GM12878 (cell line): ENCODE measurements at regions of chr9 and their contacts with region 1.

Region 1: DNA sequence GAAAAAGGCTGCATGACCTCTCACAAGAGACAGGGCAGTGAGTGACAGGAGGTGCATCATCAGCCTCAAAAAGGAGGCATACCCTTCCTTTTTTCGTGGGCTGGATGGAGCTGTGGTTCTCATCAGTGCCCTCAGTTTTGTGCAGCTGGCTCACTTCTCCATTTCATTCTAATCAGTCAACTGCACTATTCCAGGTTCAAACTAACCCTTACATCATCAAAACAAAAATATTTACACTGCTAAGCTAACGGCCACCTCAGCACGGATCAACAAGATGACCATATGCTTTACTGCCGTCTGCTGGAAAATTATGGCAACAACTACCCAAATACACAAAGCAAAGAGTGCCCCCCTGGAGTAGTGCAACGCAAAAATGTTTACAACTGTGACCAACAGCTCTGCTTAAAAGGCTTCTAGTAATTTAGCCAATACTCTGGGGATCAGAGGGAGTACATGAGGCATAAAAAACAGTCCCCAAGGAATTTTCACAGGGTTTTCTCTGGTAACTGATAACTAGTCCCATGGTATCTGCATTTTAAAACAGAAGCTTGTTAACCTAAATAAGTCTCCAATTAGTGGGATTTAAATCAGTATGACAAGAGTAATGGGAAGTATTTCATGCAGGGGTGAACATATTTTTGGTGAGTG is 10.8 kb downstream of the KCNV2 start:
- DNase-seq: peak; percentile 61
- ATAC-seq: peak; percentile 93
- H3K4me3 ChIP-seq: no peak overlapping the region
- H3K27ac ChIP-seq: no peak overlapping the region
- H3K4me1 ChIP-seq: no peaks in the 10 kb centered on the region; the same call in 1 of the 2 replicates
- H3K27me3 ChIP-seq: no peaks in the 10 kb centered on the region
- CTCF ChIP-seq: peak; percentile 81 to 90 (median 87)
- EP300 ChIP-seq: peak; percentile 11 to 18; a peak in 2 of 4 replicates
- POLR2A ChIP-seq: no peak
- RAD21 ChIP-seq: peak; percentile 88

Region 2: GRCh38 chr9:2158111-2158610 is 569.9 kb before region 1 on chr9:
- CTCF ChIA-PET with region 1: interaction called, 5 read pairs
- POLR2A ChIA-PET with region 1: no interaction called
- RAD21 ChIA-PET with region 1: interaction called, 3 read pairs
- SMC1A ChIA-PET with region 1: no interaction called
- in situ Hi-C with region 1: no loop called
- intact Hi-C with region 1: loop called (anchors 10 kb)
- DNase-seq: peak; percentile 39
- ATAC-seq: peak; percentile 78
- H3K4me3 ChIP-seq: peak overlapping the region; percentile 79
- H3K27ac ChIP-seq: peak overlapping the region; percentile 75
- H3K4me1 ChIP-seq: peaks cover 8% of the 10 kb centered on the region; the same call in 1 of the 2 replicates
- H3K27me3 ChIP-seq: no peaks in the 10 kb centered on the region
- CTCF ChIP-seq: no peak
- EP300 ChIP-seq: 0 out of 4 replicates have a peak, but pooled peaks of 1 of the 2 experiments have one; percentile 10
- POLR2A ChIP-seq: no peak
- RAD21 ChIP-seq: no peak

Region 3: DNA sequence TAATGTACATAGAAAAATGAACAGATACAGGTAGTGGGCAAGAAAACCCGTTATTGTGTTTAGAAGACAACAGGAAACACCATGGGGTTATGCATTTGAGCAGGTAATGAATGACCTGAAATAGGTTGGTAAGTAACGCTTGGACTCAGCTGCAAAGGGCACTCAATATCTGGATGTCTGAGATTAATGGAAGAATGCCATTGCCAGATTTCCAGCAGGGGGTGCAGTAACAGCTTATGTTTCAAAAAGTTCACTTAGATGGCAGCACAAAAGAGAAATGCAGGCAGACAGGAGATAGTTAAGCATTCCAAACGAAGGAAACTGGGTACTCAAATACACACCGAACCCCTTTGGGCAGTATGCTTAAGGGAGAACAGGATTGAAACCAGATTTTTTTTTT is 392.0 kb before region 1 on chr9:
- CTCF ChIA-PET with region 1: interaction called, 8 read pairs
- POLR2A ChIA-PET with region 1: no interaction called
- RAD21 ChIA-PET with region 1: interaction called, 7 read pairs
- SMC1A ChIA-PET with region 1: interaction called, 5 read pairs
- in situ Hi-C with region 1: no loop called
- intact Hi-C with region 1: loop called (anchors 1 kb)
- DNase-seq: no peak
- ATAC-seq: peak; percentile 39; the same call in 1 of the 3 replicates
- H3K4me3 ChIP-seq: no peak overlapping the region
- H3K27ac ChIP-seq: no peak overlapping the region
- H3K4me1 ChIP-seq: no peaks in the 10 kb centered on the region
- H3K27me3 ChIP-seq: no peaks in the 10 kb centered on the region; a peak in 1 of 4 replicates
- CTCF ChIP-seq: peak; percentile 12 to 30 (median 27); a peak in 3 of 6 replicates
- EP300 ChIP-seq: no peak
- POLR2A ChIP-seq: no peak
- RAD21 ChIP-seq: peak; percentile 34; the same call in 1 of the 2 replicates

Region 4: DNA sequence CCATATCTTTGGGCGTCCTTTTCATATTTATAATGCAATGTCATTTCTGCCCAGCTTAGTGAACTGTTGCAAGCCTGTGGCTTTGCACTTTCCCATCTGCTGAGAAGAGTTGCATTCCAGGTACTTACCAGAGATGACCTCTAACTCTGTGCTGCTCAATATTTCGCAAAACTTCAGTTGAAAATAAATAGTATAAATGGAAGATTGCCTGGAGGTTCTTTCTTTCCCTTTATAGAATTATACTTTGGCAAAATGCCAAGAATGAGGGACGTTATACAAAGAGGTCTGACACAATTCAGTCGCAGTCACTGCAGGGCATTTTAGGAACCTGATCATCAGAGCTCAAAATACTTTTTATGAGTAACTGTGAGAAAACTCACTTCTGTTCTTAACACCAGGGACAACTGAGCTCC is 125.4 kb before region 1 on chr9:
- CTCF ChIA-PET with region 1: interaction called, 4 read pairs
- POLR2A ChIA-PET with region 1: no interaction called
- RAD21 ChIA-PET with region 1: interaction called, 6 read pairs
- SMC1A ChIA-PET with region 1: interaction called, 19 read pairs
- in situ Hi-C with region 1: no loop called
- intact Hi-C with region 1: no loop called
- DNase-seq: peak; percentile 49
- ATAC-seq: peak; percentile 83
- H3K4me3 ChIP-seq: no peak overlapping the region; the same call in 1 of the 2 replicates
- H3K27ac ChIP-seq: peak overlapping the region; percentile 13
- H3K4me1 ChIP-seq: no peaks in the 10 kb centered on the region; the same call in 1 of the 2 replicates
- H3K27me3 ChIP-seq: no peaks in the 10 kb centered on the region
- CTCF ChIP-seq: no peak
- EP300 ChIP-seq: no peak
- POLR2A ChIP-seq: no peak
- RAD21 ChIP-seq: no peak

Region 5: DNA sequence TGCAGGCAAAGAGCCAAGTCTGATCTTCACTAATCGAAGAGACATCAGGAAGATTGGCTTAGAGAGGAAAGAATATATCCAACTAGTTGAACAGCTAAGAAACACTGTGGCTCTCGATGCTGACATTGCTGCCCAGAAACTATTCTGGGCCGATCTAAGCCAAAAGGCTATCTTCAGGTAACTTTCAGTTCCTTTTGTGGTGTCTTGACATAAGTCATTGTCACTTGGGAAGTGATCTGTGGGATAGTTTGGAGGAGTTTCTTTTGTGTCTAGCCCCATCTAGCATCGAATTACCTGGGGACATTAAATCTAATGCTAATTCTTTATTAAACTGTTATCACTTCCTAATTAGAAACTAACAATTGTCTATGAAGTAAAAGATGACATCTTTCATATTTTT is 82.5 kb before region 1 on chr9:
- CTCF ChIA-PET with region 1: interaction called, 25 read pairs
- POLR2A ChIA-PET with region 1: no interaction called
- RAD21 ChIA-PET with region 1: no interaction called
- SMC1A ChIA-PET with region 1: interaction called, 11 read pairs
- in situ Hi-C with region 1: no loop called
- intact Hi-C with region 1: no loop called
- DNase-seq: peak; percentile 41
- ATAC-seq: peak; percentile 87
- H3K4me3 ChIP-seq: no peak overlapping the region
- H3K27ac ChIP-seq: no peak overlapping the region
- H3K4me1 ChIP-seq: peaks cover 9% of the 10 kb centered on the region
- H3K27me3 ChIP-seq: no peaks in the 10 kb centered on the region
- CTCF ChIP-seq: peak in 1 of 3 experiments; percentile 28; a peak in 1 of 6 replicates
- EP300 ChIP-seq: peak in 1 of 2 experiments; percentile 26; a peak in 1 of 4 replicates
- POLR2A ChIP-seq: no peak
- RAD21 ChIP-seq: peak; percentile 56

Region 6: GRCh38 chr9:2697492-2697891 is 30.6 kb before region 1 on chr9:
- CTCF ChIA-PET with region 1: interaction called, 9 read pairs
- POLR2A ChIA-PET with region 1: no interaction called
- RAD21 ChIA-PET with region 1: interaction called, 3 read pairs
- SMC1A ChIA-PET with region 1: interaction called, 5 read pairs
- in situ Hi-C with region 1: no loop called
- intact Hi-C with region 1: loop called (anchors 2 kb)
- DNase-seq: peak; percentile 75
- ATAC-seq: peak; percentile 97
- H3K4me3 ChIP-seq: no peak overlapping the region
- H3K27ac ChIP-seq: peak overlapping the region; percentile 55; the same call in 1 of the 2 replicates
- H3K4me1 ChIP-seq: peaks cover 4% of the 10 kb centered on the region; the same call in 1 of the 2 replicates
- H3K27me3 ChIP-seq: no peaks in the 10 kb centered on the region
- CTCF ChIP-seq: no peak
- EP300 ChIP-seq: no peak; a peak in 1 of 4 replicates
- POLR2A ChIP-seq: no peak
- RAD21 ChIP-seq: no peak